ENCODE measurements at regions of chr13 and their contacts with region 1.

Region 1: GRCh38 chr13:110705826-110706569 is at the start of gene CARS2:
- DNase-seq: peak; percentile 72 to 93 (median 84)
- ATAC-seq: peak; percentile 97
- H3K4me3 ChIP-seq: peak within 1 kb of the TSS; percentile 66
- H3K4me3 Mint-ChIP-seq: peak within 1 kb of the TSS; percentile 81 to 95 (median 93)
- H3K27ac ChIP-seq: peak within 1 kb of the TSS; percentile 87
- H3K27ac Mint-ChIP-seq: peak within 1 kb of the TSS; percentile 71 to 96 (median 89)
- H3K4me1 ChIP-seq: peaks cover 15 to 23% of the 10 kb centered on the region in 2 donors
- H3K4me1 Mint-ChIP-seq: peaks cover 25 to 56% (median 45%) of the 10 kb centered on the region in 7 donors
- H3K27me3 ChIP-seq: no peaks in the 10 kb centered on the region
- H3K27me3 Mint-ChIP-seq: peaks cover 0 to 3% (median 0%) of the 10 kb centered on the region in 5 donors
- total RNA-seq, gene CARS2: 73.1 to 106 (median 89.7) TPM

Region 2: GRCh38 chr13:110561344-110562035 is 144.5 kb before region 1 on chr13 and contains the start of gene RAB20:
- CTCF ChIA-PET with region 1: no interaction called
- POLR2A ChIA-PET with region 1: interaction called, 3 read pairs
- intact Hi-C with region 1: loop called in 1 of 2 experiments (anchors 1 kb)
- DNase-seq: peak; percentile 5 to 66 (median 37)
- ATAC-seq: peak; percentile 82
- H3K4me3 ChIP-seq: peak within 1 kb of the TSS; percentile 79
- H3K4me3 Mint-ChIP-seq: peak within 1 kb of the TSS; percentile 85 to 99 (median 98)
- H3K27ac ChIP-seq: peak within 1 kb of the TSS; percentile 66
- H3K27ac Mint-ChIP-seq: peak within 1 kb of the TSS; percentile 73 to 96 (median 88)
- H3K4me1 ChIP-seq: peaks cover 4 to 9% of the 10 kb centered on the region in 2 donors
- H3K4me1 Mint-ChIP-seq: peaks cover 22 to 53% (median 41%) of the 10 kb centered on the region in 7 donors
- H3K27me3 ChIP-seq: no peaks in the 10 kb centered on the region
- H3K27me3 Mint-ChIP-seq: peaks cover 0 to 32% (median 4%) of the 10 kb centered on the region in 5 donors
- total RNA-seq, gene RAB20: 2.0 to 13.6 (median 4.0) TPM

Region 3: DNA sequence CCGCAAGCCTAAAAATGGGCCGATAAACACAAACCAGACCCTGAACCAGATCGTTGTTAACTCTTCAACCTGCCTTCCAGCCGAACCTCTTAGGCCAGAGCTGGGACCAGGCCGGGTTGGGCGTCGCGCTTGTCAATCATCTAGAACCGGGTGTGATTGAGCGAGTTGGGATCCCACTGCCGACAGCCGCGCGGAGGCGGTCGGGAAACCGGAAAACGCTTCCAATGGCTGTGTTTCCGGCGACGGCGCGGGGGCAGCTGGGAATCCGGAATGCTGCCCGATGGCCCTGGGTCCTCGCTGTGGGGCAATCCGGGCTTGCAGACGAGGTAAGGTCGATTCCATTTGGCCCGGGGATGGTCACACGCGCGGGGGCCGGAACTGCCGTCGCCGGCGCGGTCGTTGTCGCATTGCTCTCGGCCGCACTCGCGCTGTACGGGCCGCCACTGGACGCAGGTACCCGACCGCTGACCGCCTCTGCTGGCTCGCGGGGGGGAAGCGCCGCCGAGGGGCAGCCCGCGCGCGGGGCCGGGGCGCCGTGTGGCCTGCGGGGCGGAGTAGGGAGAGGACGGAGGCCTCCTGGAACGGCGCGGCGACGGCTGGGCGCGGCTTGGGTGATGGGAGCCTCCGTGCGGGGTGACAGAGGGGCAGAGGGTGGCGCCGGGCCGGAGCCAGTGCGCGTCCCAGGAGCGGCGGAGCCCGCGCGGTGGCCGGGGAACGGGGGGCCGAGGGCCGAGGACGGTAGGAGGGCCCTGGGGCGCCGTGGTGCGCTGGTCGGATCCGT is 90.5 kb before region 1 on chr13 and contains the start of gene NAXD:
- CTCF ChIA-PET with region 1: no interaction called
- POLR2A ChIA-PET with region 1: no interaction called
- intact Hi-C with region 1: loop called in 1 of 2 experiments (anchors 1 kb)
- DNase-seq: peak; percentile 44 to 80 (median 76)
- ATAC-seq: peak; percentile 86
- H3K4me3 ChIP-seq: peak within 1 kb of the TSS; percentile 71
- H3K4me3 Mint-ChIP-seq: peak within 1 kb of the TSS; percentile 86 to 97 (median 95)
- H3K27ac ChIP-seq: peak within 1 kb of the TSS; percentile 75
- H3K27ac Mint-ChIP-seq: peak within 1 kb of the TSS; percentile 85 to 96 (median 93)
- H3K4me1 ChIP-seq: peaks cover 9 to 13% of the 10 kb centered on the region in 2 donors
- H3K4me1 Mint-ChIP-seq: peaks cover 19 to 47% (median 38%) of the 10 kb centered on the region in 7 donors
- H3K27me3 ChIP-seq: no peaks in the 10 kb centered on the region
- H3K27me3 Mint-ChIP-seq: peaks cover 0 to 5% (median 0%) of the 10 kb centered on the region in 5 donors
- total RNA-seq, gene NAXD: 17.2 to 34.1 (median 25.9) TPM

Region 4: GRCh38 chr13:110680851-110681250 is 25.1 kb before region 1 on chr13:
- CTCF ChIA-PET with region 1: interaction called, 3 read pairs
- POLR2A ChIA-PET with region 1: interaction called, 3 read pairs
- intact Hi-C with region 1: loop called in 1 of 2 experiments (anchors 2 kb)
- DNase-seq: peak in 3 of 9 donors; percentile 8 to 22 (median 21)
- ATAC-seq: no peak
- H3K4me3 ChIP-seq: no peak overlapping the region
- H3K4me3 Mint-ChIP-seq: no peak overlapping the region
- H3K27ac ChIP-seq: no peak overlapping the region
- H3K27ac Mint-ChIP-seq: no peak overlapping the region
- H3K4me1 ChIP-seq: no peaks in the 10 kb centered on the region
- H3K4me1 Mint-ChIP-seq: peaks cover 4 to 22% (median 12%) of the 10 kb centered on the region in 7 donors
- H3K27me3 ChIP-seq: no peaks in the 10 kb centered on the region
- H3K27me3 Mint-ChIP-seq: no peaks in the 10 kb centered on the region

Region 5: GRCh38 chr13:110771194-110771593 is 65.2 kb after region 1 on chr13:
- CTCF ChIA-PET with region 1: no interaction called
- POLR2A ChIA-PET with region 1: no interaction called
- intact Hi-C with region 1: loop called in 1 of 2 experiments (anchors 2 kb)
- DNase-seq: no peak
- ATAC-seq: no peak
- H3K4me3 ChIP-seq: no peak overlapping the region
- H3K4me3 Mint-ChIP-seq: no peak overlapping the region
- H3K27ac ChIP-seq: no peak overlapping the region
- H3K27ac Mint-ChIP-seq: no peak overlapping the region
- H3K4me1 ChIP-seq: no peaks in the 10 kb centered on the region
- H3K4me1 Mint-ChIP-seq: peaks cover 0 to 2% (median 0%) of the 10 kb centered on the region in 7 donors
- H3K27me3 ChIP-seq: no peaks in the 10 kb centered on the region
- H3K27me3 Mint-ChIP-seq: peaks cover 5 to 29% (median 12%) of the 10 kb centered on the region in 5 donors

Region 6: DNA sequence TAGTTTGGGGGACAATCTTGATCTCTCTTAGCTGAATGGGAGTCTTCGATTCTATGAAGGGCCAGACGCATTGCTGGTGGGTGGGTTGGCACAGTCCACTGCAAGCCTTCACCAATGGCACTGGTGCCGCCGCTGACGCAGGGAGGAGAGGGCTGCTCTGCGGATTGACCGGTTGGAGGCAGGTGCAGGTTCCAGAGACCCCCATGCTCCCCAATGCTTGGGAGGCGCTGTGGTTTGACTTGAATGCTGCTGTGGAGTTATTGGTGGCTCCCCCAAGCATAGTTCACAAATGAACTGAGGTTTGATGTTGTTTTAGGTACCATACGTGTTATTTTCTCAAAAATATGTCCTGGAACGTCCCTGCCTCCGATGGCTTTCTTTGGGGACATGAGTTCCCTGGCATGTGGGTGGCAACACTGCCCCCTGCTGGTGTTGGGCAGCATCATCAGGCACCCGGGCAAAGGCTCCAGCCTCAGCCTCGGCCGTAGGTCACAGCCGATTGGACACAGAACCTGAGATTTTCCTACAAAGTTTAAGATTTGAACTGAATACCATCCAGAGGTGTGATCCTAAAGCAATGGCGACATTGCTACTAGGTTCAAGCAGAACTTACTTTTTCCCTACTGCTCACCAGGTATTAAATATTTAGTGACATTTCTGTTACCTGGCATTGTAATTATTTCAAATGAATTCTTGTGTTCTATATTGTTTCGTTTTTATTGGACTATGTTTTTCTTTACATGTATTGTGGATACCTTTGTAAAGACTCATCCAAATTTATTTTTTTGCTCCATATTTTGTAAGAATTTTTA is 113.4 kb after region 1 on chr13:
- CTCF ChIA-PET with region 1: no interaction called
- POLR2A ChIA-PET with region 1: no interaction called
- intact Hi-C with region 1: loop called in 1 of 2 experiments (anchors 1 kb)
- DNase-seq: peak; percentile 39 to 78 (median 66)
- ATAC-seq: peak; percentile 95
- H3K4me3 ChIP-seq: no peak overlapping the region
- H3K4me3 Mint-ChIP-seq: peak overlapping the region in 3 of 10 donors; percentile 16 to 21 (median 19)
- H3K27ac ChIP-seq: no peak overlapping the region
- H3K27ac Mint-ChIP-seq: peak overlapping the region in 1 of 9 donors; percentile 72
- H3K4me1 ChIP-seq: no peaks in the 10 kb centered on the region
- H3K4me1 Mint-ChIP-seq: peaks cover 0 to 17% (median 14%) of the 10 kb centered on the region in 7 donors
- H3K27me3 ChIP-seq: no peaks in the 10 kb centered on the region
- H3K27me3 Mint-ChIP-seq: peaks cover 0 to 13% (median 0%) of the 10 kb centered on the region in 5 donors

Region 7: GRCh38 chr13:112689303-112690165 is 1983.5 kb after region 1 on chr13 and contains the start of gene ATP11A:
- CTCF ChIA-PET with region 1: no interaction called
- POLR2A ChIA-PET with region 1: no interaction called
- intact Hi-C with region 1: loop called in 1 of 2 experiments (anchors 5 kb)
- DNase-seq: peak; percentile 67 to 90 (median 74)
- ATAC-seq: peak; percentile 85
- H3K4me3 ChIP-seq: peak within 1 kb of the TSS; percentile 78
- H3K4me3 Mint-ChIP-seq: peak within 1 kb of the TSS; percentile 79 to 96 (median 94)
- H3K27ac ChIP-seq: peak within 1 kb of the TSS; percentile 88
- H3K27ac Mint-ChIP-seq: peak within 1 kb of the TSS; percentile 79 to 96 (median 90)
- H3K4me1 ChIP-seq: peaks cover 15 to 26% of the 10 kb centered on the region in 2 donors
- H3K4me1 Mint-ChIP-seq: peaks cover 39 to 54% (median 50%) of the 10 kb centered on the region in 7 donors
- H3K27me3 ChIP-seq: no peaks in the 10 kb centered on the region
- H3K27me3 Mint-ChIP-seq: no peaks in the 10 kb centered on the region
- total RNA-seq, gene ATP11A: 45.0 to 111 (median 79.8) TPM